ENCODE measurements at regions of chr5 and their contacts with region 1.

Region 1: DNA sequence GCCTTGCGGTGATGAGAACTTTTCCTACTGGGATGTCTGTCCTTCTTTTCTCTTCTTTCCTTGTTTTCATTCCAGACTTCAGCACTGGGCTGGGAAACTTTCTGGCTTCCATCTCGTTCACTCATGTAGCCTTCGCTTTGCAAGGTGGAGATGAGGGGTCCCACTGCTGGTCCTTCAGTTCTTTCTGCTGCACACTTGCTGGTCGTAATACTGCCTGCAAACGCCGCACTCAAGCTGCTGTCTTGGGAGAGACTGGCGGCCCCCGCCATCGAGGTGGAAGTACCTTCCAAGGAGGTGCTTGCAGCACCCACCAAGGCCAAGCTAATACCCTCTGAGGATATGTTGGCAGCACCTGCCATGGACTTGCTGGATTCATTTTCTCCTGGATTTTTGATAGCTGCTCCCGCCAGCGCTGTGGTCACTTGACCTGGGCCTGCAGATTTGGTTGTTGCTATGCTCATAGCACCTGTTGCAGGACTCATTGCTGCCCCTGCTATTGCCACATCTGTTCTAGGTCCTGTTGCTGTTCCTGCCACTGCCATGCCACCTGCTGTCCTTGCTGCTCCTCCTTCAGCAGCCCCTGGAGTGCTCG is 3.0 kb downstream of the GARIN3 start:
- DNase-seq: no peak
- H3K4me3 ChIP-seq: no peak overlapping the region
- H3K27ac ChIP-seq: no peak overlapping the region
- H3K4me1 ChIP-seq: no peaks in the 10 kb centered on the region
- H3K27me3 ChIP-seq: peaks cover 21% of the 10 kb centered on the region; the same call in 1 of the 2 replicates
- CTCF ChIP-seq: no peak
- EP300 ChIP-seq: no peak
- RAD21 ChIP-seq: no peak

Region 2: GRCh38 chr5:157148734-157149615 is 14.0 kb before region 1 on chr5:
- CTCF ChIA-PET with region 1: interaction called, 16 read pairs
- POLR2A ChIA-PET with region 1: no interaction called
- DNase-seq: peak; percentile 65
- H3K4me3 ChIP-seq: no peak overlapping the region; a peak in 1 of 4 replicates
- H3K27ac ChIP-seq: no peak overlapping the region
- H3K4me1 ChIP-seq: 0 out of 4 replicates have a peak, but pooled peaks cover 0 to 1% of the 10 kb centered on the region in 2 experiments
- H3K27me3 ChIP-seq: no peaks in the 10 kb centered on the region; the same call in 1 of the 2 replicates
- CTCF ChIP-seq: peak; percentile 95
- EP300 ChIP-seq: no peak
- RAD21 ChIP-seq: peak; percentile 83

Region 3: GRCh38 chr5:157241483-157241882 is 78.5 kb after region 1 on chr5:
- CTCF ChIA-PET with region 1: no interaction called
- POLR2A ChIA-PET with region 1: no interaction called
- DNase-seq: no peak
- H3K4me3 ChIP-seq: no peak overlapping the region
- H3K27ac ChIP-seq: no peak overlapping the region
- H3K4me1 ChIP-seq: no peaks in the 10 kb centered on the region; a peak in 1 of 4 replicates
- H3K27me3 ChIP-seq: no peaks in the 10 kb centered on the region; the same call in 1 of the 2 replicates
- CTCF ChIP-seq: no peak
- EP300 ChIP-seq: no peak
- RAD21 ChIP-seq: no peak